Psoas muscle (tissue), 8 donors: ENCODE measurements at regions of chr1 and their contacts with region 1.

Region 1: GRCh38 chr1:183915625-183916510 is 110.9 kb downstream of the RGL1 start:
- DNase-seq: peak; percentile 66 to 71
- ATAC-seq: peak; percentile 83 to 97 (median 93)
- H3K4me3 ChIP-seq: peak overlapping the region; percentile 20
- H3K27ac ChIP-seq: no peak overlapping the region
- H3K4me1 ChIP-seq: peaks cover 6% of the 10 kb centered on the region
- H3K27me3 ChIP-seq: no peaks in the 10 kb centered on the region
- CTCF ChIP-seq: peak; percentile 91

Region 2: GRCh38 chr1:183655562-183656075 is 260.2 kb before region 1 on chr1:
- intact Hi-C with region 1: loop called (anchors 1 to 2 kb)
- DNase-seq: peak; percentile 73 to 84
- ATAC-seq: peak; percentile 71 to 91 (median 80)
- H3K4me3 ChIP-seq: no peak overlapping the region
- H3K27ac ChIP-seq: no peak overlapping the region
- H3K4me1 ChIP-seq: no peaks in the 10 kb centered on the region
- H3K27me3 ChIP-seq: no peaks in the 10 kb centered on the region
- CTCF ChIP-seq: peak; percentile 95

Region 3: DNA sequence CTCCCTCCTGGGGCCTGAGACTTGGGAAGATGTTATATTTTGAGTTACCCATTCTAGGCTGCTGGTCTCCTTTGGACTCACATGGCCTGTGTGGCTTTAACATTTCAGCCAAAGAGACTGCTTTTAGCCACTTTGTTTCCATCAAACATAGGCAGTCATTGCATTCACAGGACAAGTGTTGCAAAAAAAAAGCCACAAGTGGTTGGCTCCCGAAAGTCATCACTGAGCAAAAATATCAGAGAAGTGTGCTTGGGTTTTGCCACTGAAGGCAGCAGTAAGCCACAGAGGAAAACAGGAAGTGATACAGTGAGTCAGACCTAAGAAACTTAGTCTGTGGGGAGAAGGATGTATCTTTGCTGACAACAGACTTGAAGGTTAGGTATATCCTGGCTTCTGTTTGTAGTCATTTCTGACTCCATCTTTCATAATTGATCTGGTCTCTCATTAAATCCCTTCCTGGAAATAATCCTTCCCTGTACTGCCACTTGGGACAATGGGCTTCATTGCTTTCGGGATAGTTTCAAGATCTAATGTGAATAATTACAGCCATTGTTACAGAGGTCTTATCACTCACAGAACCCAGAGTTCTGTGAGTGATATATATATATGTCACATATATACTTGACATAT is 40.8 kb after region 1 on chr1:
- intact Hi-C with region 1: no loop called
- DNase-seq: no peak
- ATAC-seq: peak; percentile 72 to 76 (median 73)
- H3K4me3 ChIP-seq: no peak overlapping the region
- H3K27ac ChIP-seq: peak overlapping the region; percentile 56
- H3K4me1 ChIP-seq: no peaks in the 10 kb centered on the region
- H3K27me3 ChIP-seq: no peaks in the 10 kb centered on the region
- CTCF ChIP-seq: no peak